Caco-2 (cell line): ENCODE measurements at regions of chr21 and their contacts with region 1.

Region 1: GRCh38 chr21:28427394-28428022 is 565.2 kb downstream of the LTN1 start:
- DNase-seq: no peak
- H3K4me3 ChIP-seq: no peak overlapping the region
- H3K4me3 Mint-ChIP-seq: no peak overlapping the region
- H3K27ac Mint-ChIP-seq: peak overlapping the region; percentile 56
- H3K4me1 ChIP-seq: peaks cover 45% of the 10 kb centered on the region
- H3K4me1 Mint-ChIP-seq: peaks cover 30% of the 10 kb centered on the region
- H3K27me3 ChIP-seq: no peaks in the 10 kb centered on the region
- H3K27me3 Mint-ChIP-seq: no peaks in the 10 kb centered on the region
- CTCF ChIP-seq: no peak

Region 2: DNA sequence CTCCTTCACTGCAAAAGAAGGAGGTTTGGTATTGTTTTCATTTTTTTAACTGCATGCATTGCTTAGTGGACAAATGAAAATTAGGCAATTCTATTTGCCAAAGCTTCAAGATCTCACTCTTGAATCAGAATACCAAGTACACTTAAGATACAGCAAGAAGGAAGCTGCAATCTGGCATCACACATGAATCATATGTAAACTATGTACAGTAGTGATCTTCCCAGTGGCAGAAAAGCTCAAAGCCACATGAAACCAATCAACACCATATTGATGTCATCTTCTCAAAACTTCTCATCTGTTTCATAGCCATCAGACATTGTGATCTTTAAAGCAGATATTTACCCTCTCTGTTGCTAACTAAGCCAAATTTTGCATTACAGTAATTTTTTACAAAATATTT is 15.1 kb after region 1 on chr21:
- CTCF ChIA-PET with region 1: no interaction called
- POLR2A ChIA-PET with region 1: no interaction called
- intact Hi-C with region 1: no loop called
- DNase-seq: no peak
- H3K4me3 ChIP-seq: no peak overlapping the region
- H3K4me3 Mint-ChIP-seq: no peak overlapping the region
- H3K27ac Mint-ChIP-seq: no peak overlapping the region
- H3K4me1 ChIP-seq: no peaks in the 10 kb centered on the region
- H3K4me1 Mint-ChIP-seq: no peaks in the 10 kb centered on the region
- H3K27me3 ChIP-seq: no peaks in the 10 kb centered on the region
- H3K27me3 Mint-ChIP-seq: no peaks in the 10 kb centered on the region
- CTCF ChIP-seq: no peak

Region 3: GRCh38 chr21:28657566-28657965 is 230.1 kb after region 1 on chr21:
- CTCF ChIA-PET with region 1: no interaction called
- POLR2A ChIA-PET with region 1: no interaction called
- intact Hi-C with region 1: loop called (anchors 5 kb)
- DNase-seq: no peak
- H3K4me3 ChIP-seq: no peak overlapping the region
- H3K4me3 Mint-ChIP-seq: no peak overlapping the region
- H3K27ac Mint-ChIP-seq: no peak overlapping the region
- H3K4me1 ChIP-seq: peaks cover 13% of the 10 kb centered on the region
- H3K4me1 Mint-ChIP-seq: peaks cover 7% of the 10 kb centered on the region
- H3K27me3 ChIP-seq: no peaks in the 10 kb centered on the region
- H3K27me3 Mint-ChIP-seq: no peaks in the 10 kb centered on the region
- CTCF ChIP-seq: no peak